B cell (primary cell): ENCODE measurements at regions of chr7 and their contacts with region 1.

Region 1: DNA sequence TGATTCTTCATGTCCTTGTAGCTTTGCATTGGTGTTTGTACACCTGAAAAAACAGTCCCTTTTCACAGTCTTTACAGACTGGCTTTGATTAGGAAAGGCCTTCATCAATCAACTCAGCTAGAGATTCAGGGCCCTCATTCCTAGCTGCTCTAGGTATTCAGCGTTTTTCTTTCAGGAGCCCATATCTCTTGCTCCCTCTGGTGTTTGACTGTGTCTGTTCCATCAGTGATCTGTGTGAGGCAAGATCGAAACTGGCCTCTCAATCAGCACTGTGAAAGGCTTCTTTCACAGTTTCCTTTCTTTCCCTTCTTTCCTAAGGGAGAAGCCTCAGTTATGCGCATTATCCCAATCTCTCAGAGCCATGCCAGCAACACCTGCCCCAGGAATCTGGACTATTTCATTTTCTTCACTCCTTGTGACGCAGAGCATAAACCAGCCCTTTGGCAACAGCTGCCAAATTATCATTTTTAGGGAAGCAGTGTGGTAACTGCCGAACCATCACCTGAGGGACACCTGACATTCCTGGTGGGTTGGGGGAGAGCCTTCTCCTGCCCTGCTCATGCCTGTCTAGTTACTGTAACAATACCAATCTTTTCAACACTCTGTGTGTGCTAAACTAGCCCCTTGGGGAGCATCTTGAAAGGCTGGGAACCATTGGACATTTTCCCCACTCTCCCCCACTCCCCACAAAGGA is 75.7 kb upstream of the CCDC71L start:
- DNase-seq: peak; percentile 84
- ATAC-seq: peak; percentile 96
- H3K4me3 ChIP-seq: peak overlapping the region in 2 of 5 experiments; percentile 18 to 19
- H3K4me3 Mint-ChIP-seq: peak overlapping the region; percentile 66
- H3K27ac ChIP-seq: peak overlapping the region; percentile 22 to 66
- H3K27ac Mint-ChIP-seq: peak overlapping the region; percentile 87
- H3K4me1 ChIP-seq: peaks cover 16 to 17% of the 10 kb centered on the region in 2 donors
- H3K4me1 Mint-ChIP-seq: peaks cover 17% of the 10 kb centered on the region
- H3K27me3 ChIP-seq: no peaks in the 10 kb centered on the region
- H3K27me3 Mint-ChIP-seq: no peaks in the 10 kb centered on the region
- CTCF ChIP-seq: peak; percentile 79

Region 2: GRCh38 chr7:106461993-106462859 is 274.4 kb before region 1 on chr7:
- CTCF ChIA-PET with region 1: interaction called, 10 read pairs
- POLR2A ChIA-PET with region 1: interaction called, 6 read pairs
- intact Hi-C with region 1: no loop called
- DNase-seq: peak; percentile 58
- ATAC-seq: peak; percentile 49
- H3K4me3 ChIP-seq: no peak overlapping the region
- H3K4me3 Mint-ChIP-seq: no peak overlapping the region
- H3K27ac ChIP-seq: no peak overlapping the region
- H3K27ac Mint-ChIP-seq: no peak overlapping the region
- H3K4me1 ChIP-seq: peaks cover 11 to 23% of the 10 kb centered on the region in 2 donors
- H3K4me1 Mint-ChIP-seq: peaks cover 15% of the 10 kb centered on the region
- H3K27me3 ChIP-seq: no peaks in the 10 kb centered on the region
- H3K27me3 Mint-ChIP-seq: no peaks in the 10 kb centered on the region
- CTCF ChIP-seq: peak; percentile 70

Region 3: DNA sequence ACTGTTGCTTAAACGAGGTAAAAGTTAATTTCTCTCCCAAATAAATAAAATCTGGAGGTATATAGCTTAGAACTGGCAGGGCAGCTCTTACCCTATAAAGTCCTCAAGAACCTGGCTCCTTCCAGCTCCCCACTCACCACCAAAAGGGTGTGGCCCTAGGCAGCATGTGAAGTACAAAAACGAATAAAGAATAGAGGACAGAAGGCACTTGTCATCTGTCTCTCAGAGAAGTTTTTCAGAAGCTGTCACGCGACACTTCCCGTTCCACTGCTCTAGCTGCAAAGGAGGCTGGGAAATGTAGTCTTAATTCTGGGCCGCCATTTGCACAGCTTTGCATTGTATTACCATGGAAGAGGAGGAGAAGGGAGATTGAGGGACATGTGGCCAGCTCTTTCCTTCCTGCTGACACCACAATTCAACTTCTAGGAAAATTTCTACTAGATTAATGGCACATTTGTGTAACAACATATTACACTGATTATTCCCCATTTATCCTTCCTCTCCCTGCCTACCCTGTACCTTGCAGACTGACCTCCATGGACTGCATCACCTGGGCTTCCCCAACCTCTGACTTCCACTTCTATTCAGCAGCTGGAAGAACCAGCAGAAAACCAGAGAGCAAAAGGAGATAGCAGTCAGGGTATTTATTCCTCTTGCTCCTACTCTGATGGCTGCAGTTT is 137.9 kb before region 1 on chr7:
- CTCF ChIA-PET with region 1: interaction called, 10 read pairs
- POLR2A ChIA-PET with region 1: no interaction called
- intact Hi-C with region 1: loop called (anchors 5 kb)
- DNase-seq: peak; percentile 87
- ATAC-seq: peak; percentile 99
- H3K4me3 ChIP-seq: peak overlapping the region in 1 of 5 experiments; percentile 41
- H3K4me3 Mint-ChIP-seq: peak overlapping the region; percentile 72
- H3K27ac ChIP-seq: no peak overlapping the region
- H3K27ac Mint-ChIP-seq: peak overlapping the region; percentile 69
- H3K4me1 ChIP-seq: peaks cover 0 to 7% of the 10 kb centered on the region in 2 donors
- H3K4me1 Mint-ChIP-seq: peaks cover 6% of the 10 kb centered on the region
- H3K27me3 ChIP-seq: no peaks in the 10 kb centered on the region
- H3K27me3 Mint-ChIP-seq: no peaks in the 10 kb centered on the region
- CTCF ChIP-seq: no peak

Region 4: GRCh38 chr7:106671160-106671559 is 65.5 kb before region 1 on chr7:
- CTCF ChIA-PET with region 1: interaction called, 21 read pairs
- POLR2A ChIA-PET with region 1: no interaction called
- intact Hi-C with region 1: no loop called
- DNase-seq: no peak
- ATAC-seq: no peak
- H3K4me3 ChIP-seq: no peak overlapping the region
- H3K4me3 Mint-ChIP-seq: no peak overlapping the region
- H3K27ac ChIP-seq: no peak overlapping the region
- H3K27ac Mint-ChIP-seq: no peak overlapping the region
- H3K4me1 ChIP-seq: no peaks in the 10 kb centered on the region
- H3K4me1 Mint-ChIP-seq: no peaks in the 10 kb centered on the region
- H3K27me3 ChIP-seq: peaks cover 0 to 4% (median 0%) of the 10 kb centered on the region in 4 experiments
- H3K27me3 Mint-ChIP-seq: no peaks in the 10 kb centered on the region
- CTCF ChIP-seq: no peak

Region 5: GRCh38 chr7:106717955-106718871 is 18.4 kb before region 1 on chr7:
- CTCF ChIA-PET with region 1: interaction called, 66 read pairs
- POLR2A ChIA-PET with region 1: interaction called, 3 read pairs
- intact Hi-C with region 1: loop called (anchors 1 kb)
- DNase-seq: peak; percentile 73
- ATAC-seq: peak; percentile 91
- H3K4me3 ChIP-seq: peak overlapping the region in 1 of 5 experiments; percentile 37
- H3K4me3 Mint-ChIP-seq: no peak overlapping the region
- H3K27ac ChIP-seq: peak overlapping the region; percentile 20 to 43
- H3K27ac Mint-ChIP-seq: no peak overlapping the region
- H3K4me1 ChIP-seq: peaks cover 65 to 76% of the 10 kb centered on the region in 2 donors
- H3K4me1 Mint-ChIP-seq: peaks cover 47% of the 10 kb centered on the region
- H3K27me3 ChIP-seq: no peaks in the 10 kb centered on the region
- H3K27me3 Mint-ChIP-seq: no peaks in the 10 kb centered on the region
- CTCF ChIP-seq: no peak

Region 6: GRCh38 chr7:106883456-106884026 is 146.9 kb after region 1 on chr7:
- CTCF ChIA-PET with region 1: no interaction called
- POLR2A ChIA-PET with region 1: no interaction called
- intact Hi-C with region 1: no loop called
- DNase-seq: peak; percentile 35
- ATAC-seq: peak; percentile 71
- H3K4me3 ChIP-seq: no peak overlapping the region
- H3K4me3 Mint-ChIP-seq: peak overlapping the region; percentile 66
- H3K27ac ChIP-seq: no peak overlapping the region
- H3K27ac Mint-ChIP-seq: peak overlapping the region; percentile 62
- H3K4me1 ChIP-seq: peaks cover 15% of the 10 kb centered on the region in 2 donors
- H3K4me1 Mint-ChIP-seq: peaks cover 31% of the 10 kb centered on the region
- H3K27me3 ChIP-seq: no peaks in the 10 kb centered on the region
- H3K27me3 Mint-ChIP-seq: no peaks in the 10 kb centered on the region
- CTCF ChIP-seq: no peak